Endothelial cell of umbilical vein (primary cell): ENCODE measurements at regions of chr5 and their contacts with region 1.

Region 1: DNA sequence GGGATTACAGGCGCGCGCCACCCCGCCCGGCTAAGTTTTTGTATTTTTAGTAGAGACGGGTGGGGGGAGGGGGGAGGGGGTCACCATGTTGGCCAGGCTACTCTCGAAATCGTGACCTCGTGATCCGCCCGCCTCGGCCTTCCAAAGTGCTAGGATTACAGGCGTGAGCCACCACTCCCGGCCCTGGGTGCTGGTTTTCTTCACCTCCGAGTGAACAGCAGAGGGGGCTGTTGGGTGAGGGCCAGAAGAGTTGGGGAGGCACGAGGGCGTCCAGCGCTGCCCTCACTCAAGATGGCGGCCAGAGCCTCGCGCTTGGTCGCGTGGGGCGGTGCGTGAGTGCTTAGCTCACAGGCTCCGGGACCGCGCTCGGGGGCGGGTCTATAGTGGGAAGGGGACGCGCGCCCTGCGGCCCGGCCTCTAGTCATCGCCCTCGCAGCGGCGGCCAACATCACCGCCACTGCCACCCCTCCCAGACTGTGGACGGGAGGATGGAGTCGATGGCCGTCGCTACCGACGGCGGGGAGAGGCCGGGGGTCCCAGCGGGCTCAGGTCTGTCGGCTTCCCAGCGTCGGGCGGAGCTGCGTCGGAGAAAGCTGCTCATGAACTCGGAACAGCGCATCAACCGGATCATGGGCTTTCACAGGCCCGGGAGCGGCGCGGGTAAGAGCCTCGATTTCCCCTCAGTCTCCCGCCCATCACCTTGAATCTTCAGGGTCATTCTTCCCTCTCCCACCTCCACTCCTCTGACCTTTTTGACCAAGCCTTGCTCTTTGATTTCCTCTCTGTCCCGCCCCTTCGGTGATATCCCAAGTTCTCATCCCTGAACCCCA is at the start of gene CAMLG:
- DNase-seq: peak; percentile 99
- H3K4me3 ChIP-seq: peak within 1 kb of the TSS; percentile 27 to 71 (median 67)
- H3K27ac ChIP-seq: peak within 1 kb of the TSS; percentile 64
- H3K4me1 ChIP-seq: peaks cover 9% of the 10 kb centered on the region
- H3K27me3 ChIP-seq: no peaks in the 10 kb centered on the region
- CTCF ChIP-seq: peak; percentile 65 to 73
- POLR2A ChIP-seq: peak; percentile 90
- total RNA-seq, gene CAMLG: 32.9 and 33.3 TPM in 2 replicates

Region 2: DNA sequence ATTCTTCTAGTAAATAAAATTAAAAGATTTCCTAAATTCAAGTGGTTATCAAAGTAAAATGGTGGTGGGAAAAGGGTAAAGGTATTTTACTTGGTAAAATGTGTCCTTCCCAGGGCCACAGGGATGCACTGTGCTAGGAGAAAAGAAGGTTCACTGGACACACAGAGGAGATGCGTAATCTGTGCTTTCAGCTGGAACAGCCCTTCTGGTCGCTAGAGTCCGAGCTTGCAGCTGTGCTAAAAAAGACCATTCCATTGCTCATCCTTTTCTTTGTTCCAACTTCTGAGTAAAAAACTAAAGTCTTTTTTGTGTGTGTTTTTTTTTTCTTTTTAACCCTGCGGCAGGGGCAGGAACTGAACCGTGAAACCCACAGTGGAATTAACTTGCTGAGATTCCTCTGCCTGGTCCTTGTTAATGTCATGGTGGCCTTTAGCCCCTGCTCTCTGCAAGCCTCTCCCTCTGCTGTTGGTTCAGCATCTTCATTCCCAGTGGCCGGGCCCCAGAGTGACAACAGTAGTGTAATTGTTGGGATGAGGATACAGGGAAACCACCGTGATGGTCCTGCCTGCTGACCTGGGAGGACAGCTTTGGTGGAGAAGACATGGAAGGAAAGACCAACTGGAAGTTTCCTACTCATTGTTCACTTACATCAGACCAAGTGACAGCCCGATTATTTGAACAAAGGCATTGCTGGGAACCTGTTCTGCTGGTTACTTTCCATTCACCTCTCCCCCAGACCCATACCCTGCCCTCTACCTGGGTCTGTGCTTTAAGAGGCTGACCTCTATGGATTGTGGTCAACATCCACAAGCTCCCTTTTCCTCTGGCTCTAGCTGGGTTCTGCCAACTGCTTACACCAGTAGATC is 1094.1 kb before region 1 on chr5:
- CTCF ChIA-PET with region 1: no interaction called
- POLR2A ChIA-PET with region 1: no interaction called
- dilution Hi-C with region 1: no loop called
- intact Hi-C with region 1: no loop called
- DNase-seq: no peak
- H3K4me3 ChIP-seq: no peak overlapping the region
- H3K27ac ChIP-seq: no peak overlapping the region
- H3K4me1 ChIP-seq: no peaks in the 10 kb centered on the region
- H3K27me3 ChIP-seq: peaks cover 1 to 7% of the 10 kb centered on the region in 2 experiments
- CTCF ChIP-seq: no peak
- POLR2A ChIP-seq: no peak

Region 3: GRCh38 chr5:134176511-134177368 is 561.6 kb before region 1 on chr5 and contains the start of gene SKP1:
- CTCF ChIA-PET with region 1: no interaction called
- POLR2A ChIA-PET with region 1: no interaction called
- dilution Hi-C with region 1: no loop called
- intact Hi-C with region 1: loop called (anchors 2 kb)
- DNase-seq: peak; percentile 86
- H3K4me3 ChIP-seq: peak within 1 kb of the TSS; percentile 91 to 99 (median 98)
- H3K27ac ChIP-seq: peak within 1 kb of the TSS; percentile 85
- H3K4me1 ChIP-seq: peaks cover 18% of the 10 kb centered on the region
- H3K27me3 ChIP-seq: no peaks in the 10 kb centered on the region
- CTCF ChIP-seq: no peak
- POLR2A ChIP-seq: peak; percentile 99
- total RNA-seq, gene SKP1: 311 and 320 TPM in 2 replicates

Region 4: GRCh38 chr5:134411546-134412266 is 326.6 kb before region 1 on chr5 and contains the start of gene CDKN2AIPNL:
- CTCF ChIA-PET with region 1: no interaction called
- POLR2A ChIA-PET with region 1: no interaction called
- dilution Hi-C with region 1: no loop called
- intact Hi-C with region 1: loop called (anchors 5 kb)
- DNase-seq: peak; percentile 86
- H3K4me3 ChIP-seq: peak within 1 kb of the TSS; percentile 75 to 88 (median 84)
- H3K27ac ChIP-seq: peak within 1 kb of the TSS; percentile 40
- H3K4me1 ChIP-seq: peaks cover 15% of the 10 kb centered on the region
- H3K27me3 ChIP-seq: no peaks in the 10 kb centered on the region
- CTCF ChIP-seq: peak; percentile 71 to 86
- POLR2A ChIP-seq: peak; percentile 86
- total RNA-seq, gene CDKN2AIPNL: 35.1 and 36.5 TPM in 2 replicates

Region 5: DNA sequence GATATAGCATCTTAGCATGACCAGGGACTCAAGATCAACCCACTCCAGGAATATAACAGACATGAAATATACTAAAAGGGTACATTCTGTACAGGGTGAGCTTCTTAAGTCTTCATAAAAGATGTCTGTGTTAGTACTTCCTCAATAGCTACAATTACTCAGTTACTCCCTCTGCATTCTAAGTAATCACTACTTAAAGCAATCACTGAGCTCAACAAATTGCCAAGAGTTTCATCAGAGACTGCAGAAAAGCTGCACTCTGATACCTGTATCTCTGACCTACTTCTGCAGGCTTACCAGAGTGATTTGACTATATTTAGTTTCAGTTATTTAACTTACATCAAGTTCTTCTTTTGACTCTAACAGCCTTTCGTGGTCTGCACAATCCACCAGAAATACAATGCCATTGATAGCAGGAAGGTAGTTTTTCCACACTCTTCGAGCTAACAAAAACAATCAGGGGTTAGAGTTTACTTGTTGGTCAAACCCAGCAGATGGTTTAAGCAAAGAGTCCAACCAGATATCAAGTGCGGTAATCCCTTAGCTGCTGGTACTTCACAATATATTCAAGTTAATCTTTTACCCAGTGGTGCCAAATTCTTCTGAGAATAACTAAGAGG is 129.0 kb before region 1 on chr5:
- CTCF ChIA-PET with region 1: no interaction called
- POLR2A ChIA-PET with region 1: no interaction called
- dilution Hi-C with region 1: no loop called
- intact Hi-C with region 1: no loop called
- DNase-seq: no peak
- H3K4me3 ChIP-seq: no peak overlapping the region
- H3K27ac ChIP-seq: no peak overlapping the region
- H3K4me1 ChIP-seq: peaks cover 3% of the 10 kb centered on the region
- H3K27me3 ChIP-seq: no peaks in the 10 kb centered on the region
- CTCF ChIP-seq: no peak
- POLR2A ChIP-seq: no peak

Region 6: DNA sequence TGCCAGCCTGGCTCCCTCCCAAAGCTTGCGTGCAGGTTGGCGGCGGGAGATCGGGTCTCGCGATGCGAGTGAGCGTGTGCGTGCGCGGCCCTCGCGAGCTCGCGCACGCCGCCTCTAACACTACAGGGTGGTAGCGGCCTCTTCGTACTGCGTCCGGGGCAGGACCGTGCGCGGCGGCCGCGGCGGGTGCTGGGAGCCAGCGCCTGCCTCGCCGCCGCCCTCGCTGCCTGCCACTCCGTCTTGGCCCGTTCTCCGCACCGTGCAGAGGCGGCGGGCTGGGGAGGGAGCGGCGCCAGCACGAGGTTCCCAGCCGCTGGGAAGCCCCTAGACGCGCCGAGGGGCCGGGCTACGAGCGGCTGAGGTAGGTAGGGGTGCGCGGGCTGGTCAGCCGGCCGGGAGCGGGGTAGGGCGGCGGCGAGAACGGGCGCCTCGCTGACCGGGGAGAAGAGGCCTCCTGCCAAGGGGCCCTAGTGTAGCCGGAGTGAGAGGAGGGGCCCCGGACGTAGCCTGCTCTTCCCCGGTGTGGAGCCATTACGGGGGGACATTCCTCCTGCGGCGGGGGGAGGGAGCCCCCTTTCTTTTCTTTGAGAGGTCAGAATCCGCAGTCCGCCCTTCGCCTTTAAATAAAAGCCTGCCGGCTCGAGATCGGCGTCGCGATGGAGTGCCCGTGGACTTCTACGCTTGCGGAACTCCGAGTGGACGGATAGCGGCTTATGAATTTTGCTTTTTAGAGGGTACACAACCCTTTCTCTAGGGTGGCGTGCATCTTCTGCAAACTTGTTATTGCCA is 107.7 kb after region 1 on chr5 and contains the start of gene C5orf24:
- CTCF ChIA-PET with region 1: interaction called, 4 read pairs
- POLR2A ChIA-PET with region 1: interaction called, 3 read pairs
- dilution Hi-C with region 1: no loop called
- intact Hi-C with region 1: loop called (anchors 1 kb)
- DNase-seq: peak; percentile 98
- H3K4me3 ChIP-seq: peak within 1 kb of the TSS; percentile 78 to 97 (median 82)
- H3K27ac ChIP-seq: peak within 1 kb of the TSS; percentile 90
- H3K4me1 ChIP-seq: peaks cover 37% of the 10 kb centered on the region
- H3K27me3 ChIP-seq: no peaks in the 10 kb centered on the region
- CTCF ChIP-seq: no peak
- POLR2A ChIP-seq: peak; percentile 97
- total RNA-seq, gene C5orf24: 56.0 and 56.2 TPM in 2 replicates

Region 7: DNA sequence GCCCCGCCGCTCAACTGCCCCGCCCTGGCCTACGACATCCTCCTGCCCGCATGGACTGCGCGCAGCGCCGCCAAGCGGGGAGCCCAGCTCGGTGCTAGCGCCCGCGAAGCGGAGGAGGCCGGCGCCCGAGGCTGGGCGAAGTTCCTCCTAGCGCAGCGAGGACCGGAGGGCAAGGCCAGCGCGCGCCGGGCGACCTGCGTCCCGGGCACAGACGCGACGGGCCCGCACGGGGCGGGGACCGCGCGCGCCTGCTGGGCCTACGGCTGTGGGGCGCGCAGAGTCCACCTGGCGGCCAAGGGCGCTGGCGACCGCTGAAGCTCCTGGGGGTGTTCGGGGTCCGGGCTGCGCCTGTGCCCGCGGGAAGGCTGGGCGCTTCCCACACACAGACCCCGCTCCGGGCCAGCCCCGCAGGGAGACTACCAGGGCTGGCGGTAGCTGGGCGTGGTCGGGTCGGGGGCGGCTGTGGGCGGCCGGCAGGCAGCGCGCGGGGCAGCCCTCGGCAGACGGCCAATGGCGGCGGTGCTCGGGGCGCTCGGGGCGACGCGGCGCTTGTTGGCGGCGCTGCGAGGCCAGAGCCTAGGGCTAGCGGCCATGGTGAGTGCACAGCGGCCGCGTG is 166.4 kb after region 1 on chr5 and contains the start of gene PCBD2:
- CTCF ChIA-PET with region 1: interaction called, 18 read pairs
- POLR2A ChIA-PET with region 1: interaction called, 4 read pairs
- dilution Hi-C with region 1: no loop called
- intact Hi-C with region 1: loop called (anchors 1 kb)
- DNase-seq: peak; percentile 90
- H3K4me3 ChIP-seq: peak within 1 kb of the TSS; percentile 66 to 71 (median 69)
- H3K27ac ChIP-seq: peak within 1 kb of the TSS; percentile 85
- H3K4me1 ChIP-seq: no peaks in the 10 kb centered on the region
- H3K27me3 ChIP-seq: no peaks in the 10 kb centered on the region
- CTCF ChIP-seq: peak; percentile 95 to 96
- POLR2A ChIP-seq: peak; percentile 79
- total RNA-seq, gene PCBD2: 10.0 and 10.7 TPM in 2 replicates